ENCODE measurements at regions of chr16 and their contacts with region 1.

Region 1: GRCh38 chr16:5033256-5034169 is at the start of gene NAGPA:
- DNase-seq: peak; percentile 68 to 91 (median 87)
- ATAC-seq: peak; percentile 93
- H3K4me3 ChIP-seq: peak within 1 kb of the TSS; percentile 80
- H3K4me3 Mint-ChIP-seq: peak within 1 kb of the TSS; percentile 73 to 94 (median 90)
- H3K27ac ChIP-seq: peak within 1 kb of the TSS; percentile 70
- H3K27ac Mint-ChIP-seq: peak within 1 kb of the TSS; percentile 68 to 95 (median 91)
- H3K4me1 ChIP-seq: peaks cover 17 to 18% of the 10 kb centered on the region in 2 donors
- H3K4me1 Mint-ChIP-seq: peaks cover 17 to 33% (median 23%) of the 10 kb centered on the region in 7 donors
- H3K27me3 ChIP-seq: no peaks in the 10 kb centered on the region
- H3K27me3 Mint-ChIP-seq: no peaks in the 10 kb centered on the region
- total RNA-seq, gene NAGPA: 17.8 to 39.5 (median 34.1) TPM

Region 2: GRCh38 chr16:4654011-4654963 is 379.2 kb before region 1 on chr16:
- CTCF ChIA-PET with region 1: no interaction called
- POLR2A ChIA-PET with region 1: interaction called, 13 read pairs
- intact Hi-C with region 1: no loop called
- DNase-seq: no peak
- ATAC-seq: no peak
- H3K4me3 ChIP-seq: no peak overlapping the region
- H3K4me3 Mint-ChIP-seq: no peak overlapping the region
- H3K27ac ChIP-seq: no peak overlapping the region
- H3K27ac Mint-ChIP-seq: peak overlapping the region in 2 of 9 donors; percentile 30 to 51
- H3K4me1 ChIP-seq: peaks cover 0 to 17% of the 10 kb centered on the region in 2 donors
- H3K4me1 Mint-ChIP-seq: peaks cover 17 to 34% (median 24%) of the 10 kb centered on the region in 7 donors
- H3K27me3 ChIP-seq: no peaks in the 10 kb centered on the region
- H3K27me3 Mint-ChIP-seq: no peaks in the 10 kb centered on the region

Region 3: GRCh38 chr16:4802659-4803287 is 230.7 kb before region 1 on chr16:
- CTCF ChIA-PET with region 1: no interaction called
- POLR2A ChIA-PET with region 1: no interaction called
- intact Hi-C with region 1: loop called in 1 of 2 experiments (anchors 1 kb)
- DNase-seq: peak; percentile 82 to 97 (median 93)
- ATAC-seq: peak; percentile 93
- H3K4me3 ChIP-seq: peak overlapping the region; percentile 79
- H3K4me3 Mint-ChIP-seq: peak overlapping the region; percentile 81 to 86 (median 86)
- H3K27ac ChIP-seq: peak overlapping the region; percentile 60
- H3K27ac Mint-ChIP-seq: peak overlapping the region in 8 of 9 donors; percentile 36 to 84 (median 74)
- H3K4me1 ChIP-seq: peaks cover 10 to 18% of the 10 kb centered on the region in 2 donors
- H3K4me1 Mint-ChIP-seq: peaks cover 7 to 19% (median 12%) of the 10 kb centered on the region in 7 donors
- H3K27me3 ChIP-seq: no peaks in the 10 kb centered on the region
- H3K27me3 Mint-ChIP-seq: no peaks in the 10 kb centered on the region

Region 4: DNA sequence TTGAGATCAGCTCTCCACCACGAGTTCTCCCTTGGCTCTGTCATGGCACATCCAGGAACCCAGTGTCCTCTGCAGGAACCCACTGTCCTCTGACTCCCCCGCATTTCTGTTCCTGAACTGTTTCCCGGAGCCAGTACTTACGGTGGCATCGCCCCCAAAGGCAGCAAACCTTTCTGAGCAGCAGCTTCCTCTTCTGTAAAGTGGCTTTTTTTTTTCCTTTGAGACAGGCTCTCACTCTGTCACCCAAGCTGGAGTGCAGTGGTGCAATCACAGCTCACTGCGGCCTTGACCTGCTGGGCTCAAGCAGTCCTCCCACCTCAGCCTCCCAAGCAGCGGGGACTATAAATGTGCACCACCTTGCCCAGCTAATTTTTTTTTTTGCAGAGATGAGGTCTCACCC is 31.9 kb before region 1 on chr16:
- CTCF ChIA-PET with region 1: no interaction called
- POLR2A ChIA-PET with region 1: no interaction called
- intact Hi-C with region 1: no loop called
- DNase-seq: no peak
- ATAC-seq: no peak
- H3K4me3 ChIP-seq: no peak overlapping the region
- H3K4me3 Mint-ChIP-seq: no peak overlapping the region
- H3K27ac ChIP-seq: no peak overlapping the region
- H3K27ac Mint-ChIP-seq: no peak overlapping the region
- H3K4me1 ChIP-seq: no peaks in the 10 kb centered on the region
- H3K4me1 Mint-ChIP-seq: no peaks in the 10 kb centered on the region
- H3K27me3 ChIP-seq: no peaks in the 10 kb centered on the region
- H3K27me3 Mint-ChIP-seq: peaks cover 0 to 14% (median 9%) of the 10 kb centered on the region in 5 donors

Region 5: DNA sequence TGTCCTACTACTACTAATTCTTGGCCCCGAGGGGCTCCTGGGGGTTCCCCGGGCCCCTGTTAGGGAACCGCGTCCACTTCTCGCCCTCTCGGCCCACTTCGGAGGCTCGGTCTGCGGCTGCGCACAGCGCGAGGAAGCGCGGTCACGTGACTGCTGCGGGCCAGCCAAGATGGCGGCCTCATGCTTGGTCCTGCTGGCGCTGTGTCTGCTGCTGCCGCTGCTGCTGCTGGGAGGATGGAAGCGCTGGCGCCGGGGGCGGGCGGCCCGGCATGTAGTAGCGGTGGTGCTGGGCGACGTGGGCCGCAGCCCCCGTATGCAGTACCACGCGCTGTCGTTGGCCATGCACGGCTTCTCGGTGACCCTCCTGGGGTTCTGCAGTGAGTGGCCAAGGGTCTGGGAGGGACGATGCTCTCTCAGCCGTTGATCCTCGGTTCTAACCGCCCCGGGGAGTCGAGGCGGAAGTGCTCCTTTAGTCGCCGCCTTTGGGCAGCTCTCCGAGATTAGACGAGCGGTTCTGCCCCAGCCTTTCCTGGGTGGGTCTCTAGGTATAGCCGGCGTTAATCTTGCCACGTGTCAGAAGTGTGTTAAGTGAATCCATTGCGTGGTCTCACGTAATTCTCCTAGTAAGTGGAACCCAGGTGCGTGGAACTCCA is 38.3 kb after region 1 on chr16 and contains the start of gene ALG1:
- CTCF ChIA-PET with region 1: interaction called, 6 read pairs
- POLR2A ChIA-PET with region 1: interaction called, 30 read pairs
- intact Hi-C with region 1: loop called (anchors 1 to 2 kb)
- DNase-seq: peak; percentile 80 to 91 (median 87)
- ATAC-seq: peak; percentile 95
- H3K4me3 ChIP-seq: peak within 1 kb of the TSS; percentile 92
- H3K4me3 Mint-ChIP-seq: peak within 1 kb of the TSS; percentile 82 to 98 (median 95)
- H3K27ac ChIP-seq: peak within 1 kb of the TSS; percentile 77
- H3K27ac Mint-ChIP-seq: peak within 1 kb of the TSS; percentile 92 to 99 (median 96)
- H3K4me1 ChIP-seq: peaks cover 15 to 17% of the 10 kb centered on the region in 2 donors
- H3K4me1 Mint-ChIP-seq: peaks cover 23 to 44% (median 32%) of the 10 kb centered on the region in 7 donors
- H3K27me3 ChIP-seq: no peaks in the 10 kb centered on the region
- H3K27me3 Mint-ChIP-seq: peaks cover 0 to 3% (median 0%) of the 10 kb centered on the region in 5 donors
- total RNA-seq, gene ALG1: 12.9 to 29.1 (median 22.1) TPM

Measured in naive thymus-derived CD4-positive, alpha-beta T cell (primary cell).